ENCODE measurements at regions of chr10 and their contacts with region 1.

Region 1: DNA sequence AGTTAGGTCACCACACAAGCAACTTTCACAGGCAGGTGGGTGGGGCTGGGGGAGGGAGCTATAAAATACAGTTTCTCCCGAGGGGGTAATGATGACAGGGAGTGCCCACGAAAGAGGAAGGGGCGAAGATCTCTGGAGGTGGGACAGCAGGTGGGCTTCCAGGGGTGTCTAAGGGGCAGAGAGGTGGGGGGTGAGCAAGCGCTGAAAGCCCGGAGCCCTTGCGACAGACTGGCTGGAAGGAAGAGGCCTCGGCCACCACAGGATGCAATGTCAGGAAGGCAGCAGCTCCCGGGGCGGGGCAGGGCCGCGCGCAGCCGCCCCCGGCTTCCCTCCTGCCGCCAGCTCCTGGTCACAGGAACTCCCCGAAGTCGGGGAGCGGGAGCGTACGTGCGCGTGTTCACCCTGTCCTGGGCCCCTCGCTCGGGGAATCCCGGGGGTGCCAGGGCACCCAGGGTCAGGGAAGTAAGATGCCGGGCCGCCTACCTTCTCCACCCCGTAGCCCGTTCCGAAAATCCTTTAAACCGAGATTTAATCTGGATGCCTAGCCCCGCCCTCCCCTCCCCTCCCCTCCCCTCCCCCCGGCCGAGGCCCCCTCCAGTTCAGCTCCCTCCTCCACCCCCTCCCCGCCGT is 105.2 kb upstream of the PPIF start:
- DNase-seq: peak; percentile 54
- ATAC-seq: peak; percentile 10
- H3K4me3 Mint-ChIP-seq: peak overlapping the region; percentile 65
- H3K27ac Mint-ChIP-seq: no peak overlapping the region
- H3K4me1 Mint-ChIP-seq: peaks cover 53% of the 10 kb centered on the region
- H3K27me3 Mint-ChIP-seq: peaks cover 72% of the 10 kb centered on the region
- CTCF ChIP-seq: no peak

Region 2: GRCh38 chr10:79166312-79166721 is 75.8 kb before region 1 on chr10:
- CTCF ChIA-PET with region 1: no interaction called
- POLR2A ChIA-PET with region 1: no interaction called
- DNase-seq: no peak
- ATAC-seq: no peak
- H3K4me3 Mint-ChIP-seq: no peak overlapping the region
- H3K27ac Mint-ChIP-seq: peak overlapping the region; percentile 91
- H3K4me1 Mint-ChIP-seq: peaks cover 33% of the 10 kb centered on the region
- H3K27me3 Mint-ChIP-seq: no peaks in the 10 kb centered on the region
- CTCF ChIP-seq: no peak

Region 3: GRCh38 chr10:79230328-79230830 is 11.7 kb before region 1 on chr10:
- CTCF ChIA-PET with region 1: interaction called, 18 read pairs
- POLR2A ChIA-PET with region 1: interaction called, 15 read pairs
- DNase-seq: peak; percentile 76
- ATAC-seq: peak; percentile 92
- H3K4me3 Mint-ChIP-seq: peak overlapping the region; percentile 25
- H3K27ac Mint-ChIP-seq: peak overlapping the region; percentile 93
- H3K4me1 Mint-ChIP-seq: peaks cover 35% of the 10 kb centered on the region
- H3K27me3 Mint-ChIP-seq: peaks cover 26% of the 10 kb centered on the region
- CTCF ChIP-seq: no peak

Region 4: DNA sequence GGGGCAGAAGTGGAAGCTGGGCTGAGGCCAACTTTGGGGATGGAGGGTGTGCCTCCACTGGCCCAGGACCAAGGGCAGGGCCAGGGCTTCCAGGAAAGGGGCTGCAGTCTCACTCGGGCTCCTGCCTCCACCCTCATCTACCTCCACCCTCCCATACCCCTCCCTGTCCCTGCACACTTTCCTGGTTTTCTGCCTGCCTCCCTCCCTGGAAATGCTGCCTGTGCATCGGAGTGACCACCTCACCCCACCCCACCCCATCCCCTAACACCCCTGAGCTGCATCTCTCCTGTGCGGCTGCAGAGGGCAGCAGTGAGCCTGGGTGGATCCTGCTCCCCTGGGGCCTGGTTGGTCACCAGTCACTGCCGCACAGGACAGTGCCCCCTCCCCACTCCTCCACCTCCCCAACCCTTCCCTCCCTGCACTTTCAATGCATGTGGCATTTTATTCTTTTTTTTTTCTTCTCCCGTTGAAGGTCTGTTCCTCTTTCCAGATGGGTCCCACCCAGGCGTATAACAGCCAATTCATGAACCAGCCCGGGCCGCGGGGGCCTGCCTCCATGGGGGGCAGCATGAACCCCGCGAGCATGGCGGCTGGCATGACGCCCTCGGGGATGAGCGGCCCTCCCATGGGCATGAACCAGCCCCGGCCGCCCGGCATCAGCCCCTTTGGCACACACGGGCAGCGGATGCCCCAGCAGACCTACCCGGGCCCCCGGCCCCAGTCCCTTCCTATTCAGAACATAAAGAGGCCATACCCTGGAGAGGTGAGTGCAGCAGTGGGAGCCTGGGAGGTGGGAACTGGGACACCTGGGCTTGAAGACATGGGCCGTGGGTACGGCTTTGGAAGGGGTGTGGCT is 51.0 kb after region 1 on chr10:
- CTCF ChIA-PET with region 1: interaction called, 11 read pairs
- POLR2A ChIA-PET with region 1: no interaction called
- DNase-seq: peak; percentile 68
- ATAC-seq: peak; percentile 95
- H3K4me3 Mint-ChIP-seq: no peak overlapping the region
- H3K27ac Mint-ChIP-seq: no peak overlapping the region
- H3K4me1 Mint-ChIP-seq: no peaks in the 10 kb centered on the region
- H3K27me3 Mint-ChIP-seq: no peaks in the 10 kb centered on the region
- CTCF ChIP-seq: peak; percentile 53